ENCODE measurements at regions of chr6 and their contacts with region 1.

Region 1: DNA sequence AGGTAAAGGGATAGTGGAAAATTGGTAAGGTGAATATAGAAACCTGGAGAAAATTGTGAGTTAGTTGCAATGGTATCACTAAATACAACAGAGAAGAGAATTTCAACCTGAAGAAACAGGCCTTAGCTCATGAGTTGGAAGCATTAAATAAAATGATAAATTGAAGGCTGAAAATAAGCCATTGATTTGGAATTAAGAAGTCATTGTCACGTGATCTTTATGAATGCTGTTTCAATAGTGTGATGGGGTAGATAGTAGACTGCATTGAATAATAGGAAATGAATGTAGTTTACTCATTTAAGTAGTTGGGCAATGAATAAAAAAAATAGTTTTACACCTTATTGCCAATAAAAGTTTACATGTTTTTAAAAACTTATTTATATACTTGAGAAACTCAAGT is 88.5 kb upstream of the ADGRB3 start:
- DNase-seq: no peak

Region 2: GRCh38 chr6:68852791-68853190 is 306.2 kb after region 1 on chr6:
- intact Hi-C with region 1: loop called in 1 of 2 experiments (anchors 5 kb)
- DNase-seq: no peak